ENCODE measurements at regions of chr9 and their contacts with region 1.

Region 1: GRCh38 chr9:109182940-109183798 is 16.1 kb upstream of the FRRS1L start:
- DNase-seq: no peak
- H3K4me3 ChIP-seq: no peak overlapping the region
- CTCF ChIP-seq: peak; percentile 61

Region 2: DNA sequence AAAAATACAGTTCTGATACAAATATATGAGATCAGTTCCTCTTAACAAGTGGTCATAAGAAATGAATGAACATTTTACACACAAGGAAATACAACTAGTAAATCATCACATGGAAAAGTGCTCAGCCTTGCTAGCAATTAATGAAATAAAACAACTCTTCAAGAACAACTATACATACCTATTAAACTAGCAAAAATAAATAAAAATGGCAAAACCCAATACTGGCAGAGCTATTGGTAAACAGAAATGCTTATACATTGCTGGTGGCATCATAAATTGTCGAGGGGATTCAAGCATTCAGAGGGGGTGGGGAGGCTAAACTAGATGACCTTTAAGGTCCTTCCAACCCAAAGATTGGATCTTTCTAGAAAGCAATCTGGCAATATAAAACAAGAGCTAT is 10.2 kb before region 1 on chr9:
- CTCF ChIA-PET with region 1: interaction called, 15 read pairs
- POLR2A ChIA-PET with region 1: no interaction called
- DNase-seq: no peak
- H3K4me3 ChIP-seq: no peak overlapping the region
- CTCF ChIP-seq: no peak

Region 3: DNA sequence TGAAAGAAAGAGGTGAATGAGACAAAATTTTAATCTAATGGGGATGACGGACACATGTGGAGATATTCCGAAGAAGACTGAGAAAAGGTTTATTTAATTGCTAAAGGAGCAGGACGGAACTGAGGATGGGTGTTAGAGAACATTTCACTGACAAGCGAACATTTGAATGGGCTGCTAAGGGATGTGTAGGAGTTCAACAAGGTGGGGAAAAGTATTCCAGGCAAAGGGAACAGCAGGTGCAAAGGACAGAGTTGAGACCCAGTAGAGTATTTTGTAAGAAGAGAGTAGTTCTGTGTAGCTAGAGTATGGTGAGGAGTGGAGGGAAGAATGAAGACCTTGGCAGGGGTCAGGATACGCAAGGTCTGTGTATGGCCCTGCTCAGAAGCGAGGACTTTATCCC is 31.2 kb after region 1 on chr9:
- CTCF ChIA-PET with region 1: no interaction called
- POLR2A ChIA-PET with region 1: no interaction called
- DNase-seq: no peak
- H3K4me3 ChIP-seq: no peak overlapping the region
- CTCF ChIP-seq: no peak

Region 4: GRCh38 chr9:109320742-109321448 is 137.7 kb after region 1 on chr9 and contains the start of gene EPB41L4B:
- CTCF ChIA-PET with region 1: interaction called, 14 read pairs
- POLR2A ChIA-PET with region 1: no interaction called
- DNase-seq: peak; percentile 21
- H3K4me3 ChIP-seq: peak within 1 kb of the TSS; percentile 54
- CTCF ChIP-seq: peak; percentile 95

Measured in AG04449 (cell line).